Right cardiac atrium (tissue), 5 donors: ENCODE measurements at regions of chr5 and their contacts with region 1.

Region 1: DNA sequence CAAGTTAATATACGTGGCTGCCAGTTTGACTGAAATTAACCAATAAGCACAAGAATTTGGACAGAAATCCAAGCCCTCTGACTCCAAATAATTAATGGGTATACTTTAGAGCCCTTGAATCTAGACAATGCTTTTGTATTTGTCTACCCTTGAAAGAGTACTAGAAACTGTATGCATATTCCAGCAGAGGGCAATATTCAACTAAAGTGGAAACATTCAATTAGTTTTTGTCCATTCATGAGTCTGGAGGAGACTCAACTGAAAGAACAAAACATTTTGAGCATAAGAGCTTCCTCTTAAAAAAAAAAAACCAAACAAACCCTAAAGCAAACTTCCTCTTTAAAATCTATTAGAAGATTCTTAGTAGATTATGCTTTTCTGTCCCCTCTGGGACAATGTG is 157.8 kb downstream of the ARHGEF28 start:
- DNase-seq: no peak
- ATAC-seq: no peak
- H3K4me3 ChIP-seq: no peak overlapping the region
- H3K27ac ChIP-seq: no peak overlapping the region
- H3K4me1 ChIP-seq: no peaks in the 10 kb centered on the region
- H3K27me3 ChIP-seq: no peaks in the 10 kb centered on the region

Region 2: DNA sequence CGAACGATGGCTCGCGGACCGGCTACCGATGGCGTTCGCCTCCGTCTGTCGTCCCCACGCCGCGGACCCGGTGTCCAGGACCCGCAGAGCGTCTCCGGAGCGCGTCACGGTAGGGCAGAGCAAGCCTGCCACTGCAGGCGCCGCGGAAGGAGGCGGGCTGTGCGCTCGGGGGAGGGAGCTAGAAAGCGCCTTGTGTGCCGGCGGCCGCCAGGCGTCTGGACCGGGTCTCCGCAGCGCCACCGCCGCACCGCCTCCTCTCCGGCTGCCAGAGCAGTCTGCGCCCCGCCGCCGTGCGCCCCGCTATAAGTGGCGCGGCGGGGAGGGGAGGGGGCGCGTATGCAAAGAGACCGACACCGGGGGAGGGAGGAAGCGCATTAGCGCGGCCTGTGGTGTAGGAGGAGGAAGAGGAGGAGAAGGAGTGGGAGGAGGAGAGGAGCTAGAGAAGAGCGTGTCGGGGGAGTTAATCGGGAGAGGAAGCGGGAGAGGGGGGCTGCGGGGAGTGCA is 856.7 kb after region 1 on chr5 and contains the start of gene ENC1:
- intact Hi-C with region 1: loop called in 1 of 4 experiments (anchors 10 kb)
- DNase-seq: peak; percentile 90 to 96 (median 95)
- ATAC-seq: peak; percentile 94
- H3K4me3 ChIP-seq: peak within 1 kb of the TSS; percentile 66
- H3K27ac ChIP-seq: peak within 1 kb of the TSS; percentile 69
- H3K4me1 ChIP-seq: peaks cover 5% of the 10 kb centered on the region
- H3K27me3 ChIP-seq: no peaks in the 10 kb centered on the region
- total RNA-seq, gene ENC1: 5.3 to 14.9 (median 7.0) TPM